ENCODE measurements at regions of chr16 and their contacts with region 1.

Region 1: DNA sequence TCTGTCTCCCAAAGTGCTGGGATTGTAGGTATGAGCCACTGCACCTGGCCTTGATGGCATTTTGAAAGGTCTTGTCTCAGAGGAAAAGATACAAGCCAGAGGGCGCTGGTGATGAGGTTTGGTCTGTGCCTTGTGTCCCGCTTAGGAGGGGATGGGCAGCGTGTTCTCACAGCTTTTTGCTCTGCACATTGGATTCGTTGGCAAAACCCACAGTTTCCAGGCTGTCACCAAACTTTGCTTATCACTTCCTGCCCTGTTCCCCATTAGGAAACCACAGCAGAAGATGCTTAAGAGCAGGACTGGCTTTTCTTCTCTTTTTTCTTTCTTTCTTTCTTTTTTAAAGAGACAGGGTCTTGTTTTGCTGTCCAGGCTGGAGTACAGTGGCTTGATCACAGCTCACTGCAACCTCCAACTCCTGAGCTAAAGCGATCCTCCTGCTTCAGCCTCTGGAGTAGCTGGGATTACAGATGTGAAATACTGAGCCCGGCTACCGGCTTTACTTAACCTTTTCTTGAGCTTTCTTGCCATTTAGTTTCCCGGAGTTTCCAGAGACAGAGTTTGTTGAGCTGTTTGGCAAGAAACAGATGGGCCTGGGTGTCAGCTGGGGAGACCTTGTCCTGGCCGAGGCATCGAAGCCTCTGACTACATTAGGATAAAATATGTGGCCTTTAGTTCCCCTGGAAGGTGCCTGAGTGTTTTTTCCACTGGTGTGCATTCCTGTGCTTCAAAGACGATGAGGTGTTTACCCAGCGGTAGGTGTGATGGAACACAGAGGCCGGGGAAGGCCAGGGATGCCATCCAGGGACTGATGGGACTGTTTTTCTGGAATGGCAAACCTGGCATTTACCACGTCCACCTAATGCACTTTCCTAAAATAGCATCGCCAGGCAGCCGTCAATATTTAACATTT is 112.9 kb downstream of the ABCC1 start:
- DNase-seq: peak; percentile 31 to 52
- ATAC-seq: no peak

Region 2: GRCh38 chr16:15857724-15858560 is 204.3 kb before region 1 on chr16:
- intact Hi-C with region 1: loop called in 1 of 2 experiments (anchors 10 kb)
- DNase-seq: peak; percentile 44 to 71
- ATAC-seq: peak; percentile 24

Measured in left colon (tissue), 2 donors.